ENCODE measurements at regions of chr6 and their contacts with region 1.

Region 1: DNA sequence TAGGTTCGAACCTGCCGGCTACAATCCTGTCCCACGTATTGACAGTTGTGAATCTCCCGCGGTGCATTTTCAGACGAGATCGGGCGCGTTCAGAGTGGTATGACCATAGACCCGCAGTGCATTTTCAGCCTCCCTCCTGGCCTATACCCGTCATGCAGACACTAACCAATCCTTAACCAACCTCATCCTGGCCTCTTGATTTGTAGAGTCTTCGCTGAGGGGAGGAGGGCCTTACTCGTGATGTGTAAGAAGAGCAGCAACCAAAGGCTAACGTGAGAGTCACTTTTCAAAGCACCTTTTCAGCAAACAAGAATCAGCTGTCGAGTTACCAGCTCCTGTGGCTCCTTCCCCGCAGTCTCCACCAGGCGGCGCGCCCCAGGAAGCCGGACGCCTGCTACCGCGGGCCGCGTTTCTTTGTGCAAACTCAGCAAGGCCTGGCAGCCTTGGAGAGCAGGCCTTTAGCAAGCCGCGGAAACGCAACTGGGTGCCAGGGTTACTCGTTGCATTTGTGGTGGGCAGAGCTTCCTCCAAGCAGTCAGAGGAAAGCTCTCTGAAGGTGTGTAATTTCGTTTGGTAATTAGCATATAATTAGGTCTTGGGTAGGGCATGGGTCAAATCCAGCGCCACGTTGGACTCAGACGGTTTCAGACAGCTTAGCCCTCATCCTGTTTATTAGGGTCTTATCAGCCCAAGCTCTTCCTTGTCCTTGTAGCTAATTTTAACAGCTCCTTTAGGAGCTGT is 139.8 kb downstream of the OR2B2 start:
- DNase-seq: peak; percentile 76 to 92 (median 84)
- ATAC-seq: peak; percentile 96
- H3K4me3 ChIP-seq: no peak overlapping the region
- H3K4me3 Mint-ChIP-seq: no peak overlapping the region
- H3K27ac ChIP-seq: peak overlapping the region in 1 of 2 experiments; percentile 8
- H3K27ac Mint-ChIP-seq: peak overlapping the region; percentile 56
- H3K4me1 ChIP-seq: peaks cover 11% of the 10 kb centered on the region
- H3K4me1 Mint-ChIP-seq: peaks cover 11% of the 10 kb centered on the region
- H3K27me3 ChIP-seq: no peaks in the 10 kb centered on the region
- H3K27me3 Mint-ChIP-seq: peaks cover 11% of the 10 kb centered on the region
- CTCF ChIP-seq: peak; percentile 85

Region 2: DNA sequence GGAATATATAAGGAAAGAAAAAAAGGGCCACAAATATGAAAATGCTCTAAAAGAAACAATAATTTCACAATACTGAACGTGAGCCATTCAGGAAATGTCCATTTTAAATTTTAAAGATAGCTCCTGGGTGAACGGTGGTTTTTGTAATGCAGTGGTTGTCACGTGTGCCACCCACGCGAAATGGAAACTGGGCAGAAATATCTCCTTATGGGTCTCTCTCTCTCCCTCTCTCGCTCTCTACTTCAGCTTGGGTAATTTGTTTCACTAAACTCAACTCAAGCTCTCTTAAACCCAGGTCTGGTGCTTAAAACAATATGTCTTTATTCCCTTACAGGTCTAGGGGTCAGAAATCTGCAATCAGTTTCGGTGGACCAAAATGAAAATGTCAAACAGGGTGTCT is 11.0 kb before region 1 on chr6:
- CTCF ChIA-PET with region 1: interaction called, 38 read pairs
- POLR2A ChIA-PET with region 1: interaction called, 3 read pairs
- intact Hi-C with region 1: no loop called
- DNase-seq: peak in 2 of 9 experiments; percentile 14 to 47
- ATAC-seq: no peak
- H3K4me3 ChIP-seq: no peak overlapping the region
- H3K4me3 Mint-ChIP-seq: no peak overlapping the region
- H3K27ac ChIP-seq: no peak overlapping the region
- H3K27ac Mint-ChIP-seq: no peak overlapping the region
- H3K4me1 ChIP-seq: peaks cover 8% of the 10 kb centered on the region
- H3K4me1 Mint-ChIP-seq: peaks cover 21% of the 10 kb centered on the region
- H3K27me3 ChIP-seq: peaks cover 0 to 2% of the 10 kb centered on the region in 2 experiments
- H3K27me3 Mint-ChIP-seq: peaks cover 5% of the 10 kb centered on the region
- CTCF ChIP-seq: no peak

Region 3: DNA sequence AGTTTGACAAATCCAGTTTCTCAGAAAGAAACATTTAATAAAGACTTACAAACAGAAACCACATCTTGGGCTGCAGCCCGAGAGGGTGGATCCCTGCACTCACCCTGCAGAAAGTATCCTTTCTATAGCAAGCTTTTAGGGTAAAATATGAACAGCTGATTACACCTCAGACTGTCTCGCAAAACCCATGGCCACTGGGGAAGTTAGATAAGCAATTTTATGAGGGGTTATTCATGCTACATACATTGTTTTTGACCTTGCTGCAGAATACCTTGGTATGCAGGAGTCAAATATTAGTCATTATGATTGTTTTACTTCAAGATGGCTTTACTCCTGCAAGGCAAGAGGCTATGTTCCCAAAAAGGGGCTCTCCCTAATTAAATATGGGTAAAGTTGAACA is 12.9 kb after region 1 on chr6:
- CTCF ChIA-PET with region 1: interaction called, 28 read pairs
- POLR2A ChIA-PET with region 1: interaction called, 3 read pairs
- intact Hi-C with region 1: no loop called
- DNase-seq: no peak
- ATAC-seq: no peak
- H3K4me3 ChIP-seq: no peak overlapping the region
- H3K4me3 Mint-ChIP-seq: no peak overlapping the region
- H3K27ac ChIP-seq: no peak overlapping the region
- H3K27ac Mint-ChIP-seq: no peak overlapping the region
- H3K4me1 ChIP-seq: no peaks in the 10 kb centered on the region
- H3K4me1 Mint-ChIP-seq: no peaks in the 10 kb centered on the region
- H3K27me3 ChIP-seq: peaks cover 0 to 3% of the 10 kb centered on the region in 2 experiments
- H3K27me3 Mint-ChIP-seq: peaks cover 30% of the 10 kb centered on the region
- CTCF ChIP-seq: no peak

Region 4: GRCh38 chr6:27951040-27951439 is 178.6 kb after region 1 on chr6:
- CTCF ChIA-PET with region 1: no interaction called
- POLR2A ChIA-PET with region 1: no interaction called
- intact Hi-C with region 1: no loop called
- DNase-seq: no peak
- ATAC-seq: no peak
- H3K4me3 ChIP-seq: no peak overlapping the region
- H3K4me3 Mint-ChIP-seq: no peak overlapping the region
- H3K27ac ChIP-seq: no peak overlapping the region
- H3K27ac Mint-ChIP-seq: no peak overlapping the region
- H3K4me1 ChIP-seq: no peaks in the 10 kb centered on the region
- H3K4me1 Mint-ChIP-seq: no peaks in the 10 kb centered on the region
- H3K27me3 ChIP-seq: peaks cover 0 to 1% of the 10 kb centered on the region in 2 experiments
- H3K27me3 Mint-ChIP-seq: peaks cover 43% of the 10 kb centered on the region
- CTCF ChIP-seq: no peak